Activated T-helper 1 cell treated with anti-CD3 and anti-CD28 coated beads, Interleukin-12 subunit alpha, Interleukin-12 subunit beta, Interleukin-2, Interleukin-4 antibody, amounts not matched to agents 30 ng/mL and 10 ng/mL and 1 ng/mL, durations not matched to agents 14 hours and 24 hours and 36 hours (primary cell): ENCODE measurements at regions of chr6 and their contacts with region 1.

Region 1: DNA sequence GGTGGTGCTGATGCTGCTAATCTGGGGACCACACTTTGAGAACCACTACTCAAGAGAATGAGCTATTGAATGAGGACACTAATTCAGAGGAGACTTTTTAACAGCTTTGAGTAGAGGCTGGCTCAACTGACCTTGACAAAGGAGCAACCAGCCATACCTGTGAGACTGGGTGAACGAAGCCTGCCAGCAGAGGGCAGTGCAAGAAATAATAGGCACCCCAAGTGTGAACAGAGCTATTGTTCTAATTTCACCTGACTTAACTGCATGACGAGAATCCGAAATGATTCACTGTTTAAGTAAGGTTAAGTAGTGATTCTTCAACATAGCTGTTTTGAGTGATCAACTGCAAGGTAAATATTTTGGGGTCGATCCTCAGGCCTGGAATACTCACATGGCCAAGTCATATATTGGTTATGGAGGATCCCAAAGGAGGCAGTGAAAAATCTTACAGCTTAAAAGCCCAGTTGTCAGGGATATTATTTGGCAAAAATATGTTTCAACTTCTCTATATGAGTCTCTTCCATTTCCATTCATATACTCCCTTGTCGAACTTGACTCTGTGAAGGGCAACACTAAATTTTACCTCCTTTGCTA is 550.5 kb upstream of the MARCKS start:
- DNase-seq: peak; percentile 17
- H3K4me3 Mint-ChIP-seq: no peak overlapping the region
- H3K27ac Mint-ChIP-seq: no peak overlapping the region
- H3K4me1 Mint-ChIP-seq: no peaks in the 10 kb centered on the region
- H3K27me3 Mint-ChIP-seq: peaks cover 3% of the 10 kb centered on the region

Region 2: GRCh38 chr6:113031591-113032238 is 274.9 kb before region 1 on chr6:
- intact Hi-C with region 1: no loop called
- DNase-seq: no peak
- H3K4me3 Mint-ChIP-seq: no peak overlapping the region
- H3K27ac Mint-ChIP-seq: no peak overlapping the region
- H3K4me1 Mint-ChIP-seq: no peaks in the 10 kb centered on the region
- H3K27me3 Mint-ChIP-seq: no peaks in the 10 kb centered on the region

Region 3: DNA sequence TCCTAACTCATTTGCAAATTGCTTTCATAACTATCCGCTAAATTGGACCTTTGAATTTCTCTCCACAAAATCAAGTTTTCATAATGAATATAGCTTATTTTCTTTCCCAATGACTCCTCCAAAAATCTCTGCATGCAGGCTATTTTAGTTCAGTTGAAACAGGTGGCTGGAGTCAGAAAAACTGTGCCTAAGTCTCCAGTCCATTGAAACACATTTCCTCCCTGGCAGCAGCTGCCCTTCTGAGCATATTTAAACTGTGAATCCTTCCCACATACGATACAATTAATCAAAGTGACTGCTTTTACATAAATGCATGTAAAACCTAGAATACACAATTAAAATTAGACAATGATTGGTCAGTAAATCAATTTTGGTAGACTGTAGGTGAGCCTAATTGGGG is 205.9 kb after region 1 on chr6:
- intact Hi-C with region 1: no loop called
- DNase-seq: no peak
- H3K4me3 Mint-ChIP-seq: no peak overlapping the region
- H3K27ac Mint-ChIP-seq: no peak overlapping the region
- H3K4me1 Mint-ChIP-seq: no peaks in the 10 kb centered on the region
- H3K27me3 Mint-ChIP-seq: no peaks in the 10 kb centered on the region

Region 4: DNA sequence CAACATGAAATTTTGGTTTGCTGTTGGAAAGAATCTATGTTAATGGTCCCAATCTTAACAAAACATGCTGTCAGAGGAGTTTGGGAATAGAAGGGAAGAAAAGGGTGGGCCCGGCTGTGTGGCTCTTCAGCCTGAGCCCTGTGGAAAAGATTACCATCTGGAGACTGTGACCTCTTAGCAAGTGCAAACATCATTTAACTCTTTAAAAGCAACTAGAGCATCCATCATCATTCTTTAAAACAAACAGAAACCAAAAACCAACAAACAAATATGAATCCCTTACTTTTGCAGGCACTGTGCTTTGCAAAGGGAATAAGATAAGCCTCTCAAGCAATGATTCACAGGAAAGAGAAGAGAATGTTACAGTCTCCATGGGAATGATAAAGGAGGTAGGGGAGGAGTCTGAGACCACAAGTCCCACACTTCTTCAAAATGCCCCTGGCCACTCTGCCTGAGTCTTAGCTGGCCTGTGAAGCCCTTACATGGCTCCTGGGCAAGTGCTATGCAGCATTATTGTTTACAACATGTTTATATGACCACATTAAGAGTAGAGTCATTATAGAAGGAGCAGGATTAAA is 292.7 kb after region 1 on chr6:
- intact Hi-C with region 1: no loop called
- DNase-seq: no peak
- H3K4me3 Mint-ChIP-seq: no peak overlapping the region
- H3K27ac Mint-ChIP-seq: no peak overlapping the region
- H3K4me1 Mint-ChIP-seq: no peaks in the 10 kb centered on the region
- H3K27me3 Mint-ChIP-seq: no peaks in the 10 kb centered on the region

Region 5: DNA sequence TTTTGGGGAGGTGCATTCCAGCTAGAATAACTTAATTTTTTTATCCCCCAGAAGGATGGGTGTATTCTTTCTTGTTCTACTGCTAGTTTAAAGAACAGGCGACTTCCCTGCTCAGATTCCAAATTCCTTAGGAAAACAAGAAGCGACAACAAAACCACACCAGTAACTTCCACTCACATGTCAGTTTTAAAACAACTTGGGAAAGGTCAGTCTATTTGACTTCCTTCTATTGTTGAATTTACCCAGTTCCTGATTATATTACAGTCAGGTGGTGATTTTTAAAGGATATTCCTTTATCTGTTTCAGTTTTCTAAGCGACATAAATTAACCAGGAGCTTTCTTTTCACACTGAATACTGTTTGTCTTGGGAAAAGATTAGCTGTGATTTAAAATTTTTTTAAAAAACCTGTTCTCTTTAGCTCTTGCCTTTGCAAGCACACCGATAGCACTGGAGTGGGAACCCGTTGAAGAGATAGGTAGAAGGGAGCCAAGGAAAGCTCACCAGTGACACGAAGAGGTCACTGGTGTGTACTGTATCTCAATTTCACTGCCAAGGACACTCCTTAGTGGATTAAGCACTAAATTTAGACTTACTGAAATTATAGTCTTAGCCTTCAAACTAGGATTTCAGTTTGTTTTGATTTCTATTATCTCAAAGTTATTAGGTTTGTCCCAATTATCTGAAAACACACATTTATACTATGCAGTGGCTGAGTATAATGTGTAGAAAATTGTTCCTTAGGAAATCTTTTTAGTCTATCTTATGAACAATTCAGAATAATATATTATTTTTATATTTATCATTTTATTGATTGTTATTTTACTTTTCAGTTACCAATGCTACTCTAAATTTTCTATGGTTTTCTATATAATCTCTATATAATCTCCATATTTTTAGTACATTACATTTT is 572.8 kb after region 1 on chr6:
- intact Hi-C with region 1: loop called (anchors 2 kb)
- DNase-seq: no peak
- H3K4me3 Mint-ChIP-seq: no peak overlapping the region
- H3K27ac Mint-ChIP-seq: no peak overlapping the region
- H3K4me1 Mint-ChIP-seq: no peaks in the 10 kb centered on the region
- H3K27me3 Mint-ChIP-seq: peaks cover 23% of the 10 kb centered on the region

Region 6: DNA sequence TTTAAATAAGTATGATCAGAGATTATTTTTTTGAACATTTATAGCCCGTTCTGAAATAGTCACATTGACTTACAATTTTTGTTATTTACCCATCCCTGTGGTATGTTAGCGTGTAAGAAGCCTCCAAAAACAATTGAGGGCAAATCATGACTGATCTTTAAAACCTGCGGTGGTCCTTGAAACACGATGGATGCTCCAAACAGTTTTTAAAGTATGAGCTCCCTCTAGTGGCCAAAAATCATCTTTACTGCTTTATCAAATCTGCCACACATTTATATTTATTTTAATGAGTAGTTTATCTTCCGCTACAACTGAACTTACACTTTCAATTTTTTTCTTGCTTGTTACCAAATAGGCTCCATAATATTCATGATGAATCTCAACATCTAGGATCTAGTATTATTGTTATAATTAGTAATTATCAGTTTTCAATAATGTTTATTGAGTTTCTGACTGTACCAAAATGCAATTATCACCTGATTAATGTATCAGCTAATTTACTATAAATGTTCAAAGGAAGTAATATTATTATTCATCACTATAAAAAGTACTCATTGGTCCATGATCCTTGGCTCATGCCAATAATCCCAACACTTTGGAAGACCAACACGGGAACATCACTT is 602.7 kb after region 1 on chr6:
- intact Hi-C with region 1: loop called (anchors 1 kb)
- DNase-seq: no peak
- H3K4me3 Mint-ChIP-seq: no peak overlapping the region
- H3K27ac Mint-ChIP-seq: no peak overlapping the region
- H3K4me1 Mint-ChIP-seq: no peaks in the 10 kb centered on the region
- H3K27me3 Mint-ChIP-seq: peaks cover 9% of the 10 kb centered on the region